ENCODE measurements at regions of chr6 and their contacts with region 1.

Region 1: GRCh38 chr6:30616811-30617564 is at the start of gene PPP1R10:
- DNase-seq: peak; percentile 95 to 100 (median 99)
- H3K4me3 ChIP-seq: peak within 1 kb of the TSS; percentile 95
- H3K4me3 Mint-ChIP-seq: peak within 1 kb of the TSS; percentile 93 to 100 (median 99)
- H3K27ac ChIP-seq: peak within 1 kb of the TSS; percentile 99
- H3K27ac Mint-ChIP-seq: peak within 1 kb of the TSS; percentile 100
- H3K4me1 ChIP-seq: peaks cover 43% of the 10 kb centered on the region
- H3K4me1 Mint-ChIP-seq: peaks cover 30 to 47% (median 45%) of the 10 kb centered on the region in 3 donors
- H3K27me3 ChIP-seq: no peaks in the 10 kb centered on the region
- H3K27me3 Mint-ChIP-seq: peaks cover 0 to 20% of the 10 kb centered on the region in 2 donors
- total RNA-seq, gene PPP1R10: 115 to 117 TPM

Region 2: GRCh38 chr6:30556066-30556905 is 60.7 kb before region 1 on chr6 and contains the start of gene GNL1:
- CTCF ChIA-PET with region 1: interaction called, 4 read pairs
- POLR2A ChIA-PET with region 1: interaction called, 32 read pairs
- DNase-seq: peak; percentile 99 to 100 (median 99)
- H3K4me3 ChIP-seq: peak within 1 kb of the TSS; percentile 97
- H3K4me3 Mint-ChIP-seq: peak within 1 kb of the TSS; percentile 94 to 100 (median 99)
- H3K27ac ChIP-seq: peak within 1 kb of the TSS; percentile 98
- H3K27ac Mint-ChIP-seq: peak within 1 kb of the TSS; percentile 98 to 100 (median 100)
- H3K4me1 ChIP-seq: peaks cover 13% of the 10 kb centered on the region
- H3K4me1 Mint-ChIP-seq: peaks cover 39 to 63% (median 58%) of the 10 kb centered on the region in 3 donors
- H3K27me3 ChIP-seq: no peaks in the 10 kb centered on the region
- H3K27me3 Mint-ChIP-seq: peaks cover 0 to 4% of the 10 kb centered on the region in 2 donors
- total RNA-seq, gene GNL1: 100 to 102 TPM

Region 3: DNA sequence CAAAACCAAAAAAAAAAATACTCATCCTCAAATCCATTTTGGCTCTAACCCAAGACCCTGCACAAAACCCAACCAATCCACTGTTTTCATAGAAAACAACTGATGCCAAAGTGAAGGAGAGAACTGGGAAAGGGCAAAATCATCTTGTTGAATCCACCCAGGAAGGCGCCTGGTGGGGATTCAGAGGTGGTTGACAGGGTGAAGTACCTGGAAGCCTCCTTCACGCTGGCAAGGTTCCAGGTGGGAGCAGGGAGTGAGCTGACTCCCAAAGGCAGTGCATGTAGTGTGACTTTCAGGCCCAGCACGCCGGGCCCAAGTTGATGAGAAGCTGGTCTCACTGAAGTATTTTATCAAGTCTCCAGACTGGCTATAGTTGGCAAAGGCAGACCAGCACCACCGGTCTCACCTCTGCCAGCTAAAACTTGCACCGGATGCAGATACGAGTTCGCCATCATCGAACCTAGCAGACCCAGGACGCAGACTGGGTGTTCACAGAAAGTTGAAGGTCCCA is 16.5 kb before region 1 on chr6:
- CTCF ChIA-PET with region 1: interaction called, 40 read pairs
- POLR2A ChIA-PET with region 1: interaction called, 10 read pairs
- DNase-seq: no peak
- H3K4me3 ChIP-seq: no peak overlapping the region
- H3K4me3 Mint-ChIP-seq: no peak overlapping the region
- H3K27ac ChIP-seq: no peak overlapping the region
- H3K27ac Mint-ChIP-seq: peak overlapping the region in 5 of 8 donors; percentile 33 to 87 (median 73)
- H3K4me1 ChIP-seq: peaks cover 7% of the 10 kb centered on the region
- H3K4me1 Mint-ChIP-seq: peaks cover 22 to 28% (median 24%) of the 10 kb centered on the region in 3 donors
- H3K27me3 ChIP-seq: no peaks in the 10 kb centered on the region
- H3K27me3 Mint-ChIP-seq: peaks cover 0 to 2% of the 10 kb centered on the region in 2 donors

Region 4: GRCh38 chr6:30651143-30651542 is 34.2 kb after region 1 on chr6:
- CTCF ChIA-PET with region 1: no interaction called
- POLR2A ChIA-PET with region 1: interaction called, 10 read pairs
- DNase-seq: no peak
- H3K4me3 ChIP-seq: no peak overlapping the region
- H3K4me3 Mint-ChIP-seq: peak overlapping the region in 2 of 7 donors; percentile 22 to 49
- H3K27ac ChIP-seq: no peak overlapping the region
- H3K27ac Mint-ChIP-seq: peak overlapping the region in 2 of 8 donors; percentile 66 to 73
- H3K4me1 ChIP-seq: peaks cover 13% of the 10 kb centered on the region
- H3K4me1 Mint-ChIP-seq: peaks cover 13 to 19% (median 15%) of the 10 kb centered on the region in 3 donors
- H3K27me3 ChIP-seq: no peaks in the 10 kb centered on the region
- H3K27me3 Mint-ChIP-seq: no peaks in the 10 kb centered on the region

Region 5: DNA sequence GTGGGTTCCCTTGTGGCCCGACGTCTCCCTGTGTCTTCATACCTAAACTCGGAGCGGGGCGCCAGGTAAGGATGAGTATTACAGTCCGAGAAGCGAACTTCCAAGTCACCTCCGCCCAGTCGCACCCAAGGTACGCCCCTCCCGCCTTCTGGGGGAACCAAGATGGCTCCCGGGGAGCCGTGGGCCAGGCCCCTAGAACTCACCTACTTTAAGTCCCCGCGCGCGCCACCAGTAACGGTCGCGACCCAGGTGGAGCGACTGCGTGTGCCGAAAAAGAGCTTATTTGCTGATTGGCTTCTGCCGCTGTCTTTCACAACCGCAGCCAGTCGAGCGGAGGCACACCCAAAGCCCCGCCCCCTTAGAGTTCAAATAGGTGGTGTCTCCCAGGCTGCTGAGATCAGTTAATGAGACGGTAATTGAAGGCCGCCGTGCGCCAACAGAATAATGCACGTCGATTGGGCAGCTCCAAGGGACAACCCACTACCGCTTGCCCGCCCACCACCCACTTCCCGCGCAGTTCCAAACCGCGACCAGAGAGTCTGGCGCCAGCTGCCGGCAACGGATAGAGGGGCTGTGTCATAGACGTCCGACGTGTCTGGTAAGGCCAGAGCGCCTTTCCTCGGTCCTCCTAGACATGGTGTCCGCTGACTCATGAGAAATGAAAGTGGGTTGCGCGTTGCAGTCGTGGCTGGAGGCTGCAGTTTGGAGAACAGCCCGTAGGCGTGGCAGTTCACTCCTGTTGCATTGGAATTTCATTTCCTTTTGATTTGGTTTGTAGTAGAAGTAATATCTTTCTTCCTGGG is 100.3 kb after region 1 on chr6 and contains the start of gene MDC1:
- CTCF ChIA-PET with region 1: interaction called, 10 read pairs
- POLR2A ChIA-PET with region 1: interaction called, 70 read pairs
- DNase-seq: peak; percentile 97 to 100 (median 99)
- H3K4me3 ChIP-seq: peak within 1 kb of the TSS; percentile 85
- H3K4me3 Mint-ChIP-seq: peak within 1 kb of the TSS; percentile 90 to 98 (median 94)
- H3K27ac ChIP-seq: peak within 1 kb of the TSS; percentile 92
- H3K27ac Mint-ChIP-seq: peak within 1 kb of the TSS; percentile 92 to 100 (median 99)
- H3K4me1 ChIP-seq: peaks cover 20% of the 10 kb centered on the region
- H3K4me1 Mint-ChIP-seq: peaks cover 45 to 64% (median 46%) of the 10 kb centered on the region in 3 donors
- H3K27me3 ChIP-seq: no peaks in the 10 kb centered on the region
- H3K27me3 Mint-ChIP-seq: peaks cover 0 to 2% of the 10 kb centered on the region in 2 donors
- total RNA-seq, gene MDC1: 59.4 to 71.1 TPM

Region 6: DNA sequence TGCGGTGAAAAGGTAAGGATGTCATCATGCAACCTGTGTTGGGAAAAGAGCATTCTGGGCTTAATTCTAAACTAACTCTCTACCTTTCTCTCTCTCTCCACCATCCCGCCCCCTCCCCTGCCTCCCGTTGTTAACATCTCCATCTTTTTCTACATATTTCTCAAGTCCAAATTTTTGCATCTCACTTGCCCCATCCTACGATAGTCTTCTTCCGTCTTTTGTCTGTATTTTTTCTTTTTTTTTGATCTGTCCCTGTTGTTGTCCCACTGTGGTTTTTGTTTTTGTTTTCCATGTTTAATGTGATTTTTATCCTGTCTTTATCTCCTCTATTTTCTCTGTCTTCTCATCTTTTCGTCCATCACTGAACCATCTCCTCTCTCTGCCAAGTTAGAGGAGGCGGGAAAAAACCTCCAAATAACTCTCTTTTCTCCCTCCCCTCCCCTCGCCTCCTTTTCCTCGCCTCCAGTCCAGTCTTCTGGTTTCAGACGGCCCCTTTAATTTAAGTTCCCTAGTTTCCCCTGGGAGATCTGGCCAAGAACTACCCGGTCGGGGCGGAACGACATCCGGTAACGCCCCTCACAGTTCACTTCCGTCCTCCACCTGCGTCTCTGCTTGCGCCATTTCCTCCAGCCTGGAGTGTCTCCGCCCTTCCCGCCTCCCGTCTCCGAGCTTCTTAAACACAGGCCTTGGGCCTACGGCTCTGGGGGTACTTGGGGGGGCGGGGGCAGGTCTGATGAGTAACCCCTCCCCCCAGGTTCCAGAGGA is 930.2 kb after region 1 on chr6 and contains the start of gene NFKBIL1:
- CTCF ChIA-PET with region 1: no interaction called
- POLR2A ChIA-PET with region 1: interaction called, 11 read pairs
- DNase-seq: peak; percentile 84 to 92 (median 87)
- H3K4me3 ChIP-seq: peak within 1 kb of the TSS; percentile 67
- H3K4me3 Mint-ChIP-seq: peak within 1 kb of the TSS; percentile 74 to 93 (median 91)
- H3K27ac ChIP-seq: peak within 1 kb of the TSS; percentile 71
- H3K27ac Mint-ChIP-seq: peak within 1 kb of the TSS; percentile 83 to 99 (median 96)
- H3K4me1 ChIP-seq: peaks cover 30% of the 10 kb centered on the region
- H3K4me1 Mint-ChIP-seq: peaks cover 38 to 50% (median 49%) of the 10 kb centered on the region in 3 donors
- H3K27me3 ChIP-seq: no peaks in the 10 kb centered on the region
- H3K27me3 Mint-ChIP-seq: no peaks in the 10 kb centered on the region
- total RNA-seq, gene NFKBIL1: 13.5 to 13.8 TPM